ENCODE measurements at regions of chr3 and their contacts with region 1.

Region 1: GRCh38 chr3:111989061-111989678 is 9.6 kb upstream of the TAGLN3 start:
- DNase-seq: peak in 4 of 5 donors; percentile 23 to 39 (median 26)
- H3K4me3 ChIP-seq: no peak overlapping the region
- H3K4me3 Mint-ChIP-seq: peak overlapping the region in 2 of 8 donors; percentile 26 to 39
- H3K27ac ChIP-seq: no peak overlapping the region
- H3K27ac Mint-ChIP-seq: no peak overlapping the region
- H3K4me1 ChIP-seq: peaks cover 17% of the 10 kb centered on the region
- H3K4me1 Mint-ChIP-seq: peaks cover 23 to 28% (median 25%) of the 10 kb centered on the region in 4 donors
- H3K27me3 ChIP-seq: no peaks in the 10 kb centered on the region
- H3K27me3 Mint-ChIP-seq: no peaks in the 10 kb centered on the region

Region 2: DNA sequence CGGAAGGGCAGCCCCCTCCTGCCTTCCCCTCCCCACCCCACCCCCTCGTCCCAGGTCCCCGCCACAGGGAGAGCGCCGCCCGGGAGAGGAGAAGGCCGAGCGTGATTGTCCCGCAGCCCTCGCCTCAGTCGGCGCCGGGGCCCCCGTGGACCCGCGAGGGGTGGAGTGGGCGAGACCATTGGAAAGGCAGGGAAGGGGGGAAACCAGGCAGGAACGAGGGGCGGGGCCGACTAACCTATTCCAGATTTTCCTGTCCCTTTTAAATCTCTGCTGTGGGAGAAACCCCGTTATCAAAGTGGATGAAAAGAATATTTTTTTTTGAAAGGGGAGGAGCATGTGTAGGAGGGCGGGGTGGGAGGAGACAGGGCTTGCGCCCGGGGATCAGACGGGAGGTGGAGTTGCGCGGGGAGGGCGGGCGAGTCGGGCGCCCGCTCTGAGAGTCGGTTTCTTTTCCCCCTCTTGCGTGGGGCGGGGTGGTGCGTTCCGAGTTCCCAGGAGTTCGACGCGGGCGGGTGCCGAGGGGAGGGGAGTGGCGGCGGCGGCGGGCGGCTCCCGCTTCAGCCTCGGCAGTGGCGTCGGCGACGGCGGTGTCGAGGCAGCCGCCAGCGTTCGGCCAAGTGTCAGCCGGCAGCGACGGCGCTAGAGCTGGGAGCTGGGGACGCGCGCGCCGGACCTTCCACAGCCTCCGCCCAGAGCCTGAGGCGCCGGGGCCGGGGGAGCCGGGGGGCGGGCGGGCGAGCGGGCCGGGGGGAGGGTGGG is 917.7 kb before region 1 on chr3 and contains the start of gene NECTIN3:
- CTCF ChIA-PET with region 1: no interaction called
- POLR2A ChIA-PET with region 1: no interaction called
- intact Hi-C with region 1: loop called (anchors 10 kb)
- DNase-seq: peak; percentile 84 to 92 (median 87)
- H3K4me3 ChIP-seq: peak within 1 kb of the TSS; percentile 78 to 82
- H3K4me3 Mint-ChIP-seq: peak within 1 kb of the TSS; percentile 93 to 97 (median 96)
- H3K27ac ChIP-seq: peak within 1 kb of the TSS; percentile 57
- H3K27ac Mint-ChIP-seq: peak within 1 kb of the TSS; percentile 90 to 95 (median 93)
- H3K4me1 ChIP-seq: peaks cover 32% of the 10 kb centered on the region
- H3K4me1 Mint-ChIP-seq: peaks cover 33 to 54% (median 44%) of the 10 kb centered on the region in 4 donors
- H3K27me3 ChIP-seq: no peaks in the 10 kb centered on the region
- H3K27me3 Mint-ChIP-seq: peaks cover 0 to 4% of the 10 kb centered on the region in 2 donors
- total RNA-seq, gene NECTIN3: 12.2 to 15.6 TPM

Region 3: GRCh38 chr3:111967651-111968274 is 21.4 kb before region 1 on chr3:
- CTCF ChIA-PET with region 1: interaction called, 12 read pairs
- POLR2A ChIA-PET with region 1: interaction called, 3 read pairs
- intact Hi-C with region 1: no loop called
- DNase-seq: peak; percentile 69 to 77 (median 69)
- H3K4me3 ChIP-seq: no peak overlapping the region
- H3K4me3 Mint-ChIP-seq: peak overlapping the region in 1 of 8 donors; percentile 11
- H3K27ac ChIP-seq: no peak overlapping the region
- H3K27ac Mint-ChIP-seq: peak overlapping the region in 2 of 7 donors; percentile 43 to 44
- H3K4me1 ChIP-seq: no peaks in the 10 kb centered on the region
- H3K4me1 Mint-ChIP-seq: peaks cover 2 to 6% (median 4%) of the 10 kb centered on the region in 4 donors
- H3K27me3 ChIP-seq: no peaks in the 10 kb centered on the region
- H3K27me3 Mint-ChIP-seq: no peaks in the 10 kb centered on the region

Region 4: DNA sequence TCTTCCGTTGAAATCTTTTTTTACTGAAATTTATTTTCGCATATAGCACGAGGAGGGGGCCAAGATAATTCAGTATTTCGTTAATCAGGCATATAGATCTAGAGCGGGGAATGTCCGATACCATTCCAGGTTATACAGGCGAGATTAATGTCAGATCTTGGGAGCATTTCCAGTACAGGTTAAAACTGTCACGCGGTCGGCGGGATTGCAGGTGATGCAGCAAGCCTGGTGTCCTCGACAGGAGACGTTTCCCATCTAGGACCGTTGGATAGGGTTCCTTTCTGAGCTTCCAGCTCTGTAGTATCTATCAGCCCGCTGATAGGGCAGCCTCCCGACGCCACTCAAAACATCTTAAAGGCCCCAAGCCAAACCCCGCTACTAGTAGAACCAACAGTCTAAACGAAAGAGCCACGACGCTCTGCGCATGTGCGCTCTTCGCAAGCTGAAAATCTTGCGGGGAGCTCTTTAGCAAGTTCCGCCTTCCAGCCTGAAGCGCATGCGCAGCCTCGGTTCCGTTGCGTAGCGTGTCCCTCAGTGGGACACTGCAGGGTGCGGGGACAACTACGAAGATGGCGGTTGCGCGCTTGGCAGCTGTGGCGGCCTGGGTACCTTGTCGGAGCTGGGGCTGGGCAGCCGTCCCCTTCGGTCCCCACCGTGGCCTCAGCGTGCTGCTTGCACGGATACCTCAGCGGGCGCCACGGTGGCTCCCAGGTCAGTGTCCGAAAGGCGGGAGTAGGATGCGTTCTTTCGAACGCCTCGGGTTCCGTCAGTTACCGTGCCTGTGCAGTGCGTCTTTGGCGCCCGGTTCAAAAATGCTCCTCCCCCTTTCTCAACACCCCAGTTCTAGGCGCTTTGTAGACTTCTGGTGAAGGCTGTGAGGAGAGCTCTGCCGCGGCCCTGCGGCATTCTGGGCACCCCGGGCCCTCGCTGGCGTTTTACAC is 10.4 kb before region 1 on chr3 and contains the start of gene ABHD10:
- CTCF ChIA-PET with region 1: interaction called, 55 read pairs
- POLR2A ChIA-PET with region 1: interaction called, 26 read pairs
- intact Hi-C with region 1: loop called (anchors 1 kb)
- DNase-seq: peak; percentile 92 to 98 (median 96)
- H3K4me3 ChIP-seq: peak within 1 kb of the TSS; percentile 90 to 95
- H3K4me3 Mint-ChIP-seq: peak within 1 kb of the TSS; percentile 92 to 97 (median 92)
- H3K27ac ChIP-seq: peak within 1 kb of the TSS; percentile 80
- H3K27ac Mint-ChIP-seq: peak within 1 kb of the TSS; percentile 91 to 97 (median 95)
- H3K4me1 ChIP-seq: peaks cover 43% of the 10 kb centered on the region
- H3K4me1 Mint-ChIP-seq: peaks cover 26 to 48% (median 35%) of the 10 kb centered on the region in 4 donors
- H3K27me3 ChIP-seq: no peaks in the 10 kb centered on the region
- H3K27me3 Mint-ChIP-seq: no peaks in the 10 kb centered on the region
- total RNA-seq, gene ABHD10: 39.7 to 40.1 TPM

Region 5: GRCh38 chr3:112007633-112008032 is 18.5 kb after region 1 on chr3:
- CTCF ChIA-PET with region 1: interaction called, 207 read pairs
- POLR2A ChIA-PET with region 1: no interaction called
- intact Hi-C with region 1: no loop called
- DNase-seq: no peak
- H3K4me3 ChIP-seq: no peak overlapping the region
- H3K4me3 Mint-ChIP-seq: no peak overlapping the region
- H3K27ac ChIP-seq: no peak overlapping the region
- H3K27ac Mint-ChIP-seq: peak overlapping the region in 1 of 7 donors; percentile 58
- H3K4me1 ChIP-seq: peaks cover 13% of the 10 kb centered on the region
- H3K4me1 Mint-ChIP-seq: peaks cover 16 to 20% (median 18%) of the 10 kb centered on the region in 4 donors
- H3K27me3 ChIP-seq: no peaks in the 10 kb centered on the region
- H3K27me3 Mint-ChIP-seq: no peaks in the 10 kb centered on the region

Region 6: DNA sequence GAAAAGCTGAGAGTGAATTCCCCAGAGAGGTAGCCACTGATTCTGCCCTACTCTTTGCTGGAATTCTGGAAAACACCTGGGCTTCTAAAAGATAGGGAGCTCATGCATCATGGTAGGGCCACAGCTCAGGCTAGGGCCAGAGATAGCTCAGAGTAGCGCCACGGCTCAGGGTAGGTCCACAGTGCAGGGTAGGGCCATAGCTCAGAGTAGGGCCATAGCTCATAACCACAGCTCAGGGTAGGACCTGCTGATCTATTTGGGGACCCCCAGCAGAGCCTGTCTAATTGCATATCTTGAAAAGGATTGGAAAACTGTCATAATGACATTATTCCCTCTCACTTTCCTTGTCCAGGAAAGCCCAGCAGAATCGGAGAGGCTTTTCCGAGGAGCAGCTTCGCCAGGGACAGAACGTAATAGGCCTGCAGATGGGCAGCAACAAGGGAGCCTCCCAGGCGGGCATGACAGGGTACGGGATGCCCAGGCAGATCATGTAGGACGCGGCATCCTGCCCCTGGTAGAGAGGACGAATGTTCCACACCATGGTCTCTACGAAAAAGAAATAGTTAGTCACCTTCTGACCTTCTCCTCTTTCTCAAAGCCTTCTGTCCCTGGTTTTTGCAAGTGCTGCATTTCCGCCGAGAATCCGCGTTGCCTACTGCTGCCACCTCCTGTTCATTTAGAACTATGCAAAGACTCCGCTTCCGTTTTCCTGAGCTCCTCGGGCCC is 24.1 kb after region 1 on chr3:
- CTCF ChIA-PET with region 1: interaction called, 207 read pairs
- POLR2A ChIA-PET with region 1: interaction called, 8 read pairs
- intact Hi-C with region 1: loop called (anchors 1 kb)
- DNase-seq: peak; percentile 46 to 54 (median 51)
- H3K4me3 ChIP-seq: peak overlapping the region in 1 of 2 donors; percentile 19
- H3K4me3 Mint-ChIP-seq: peak overlapping the region in 5 of 8 donors; percentile 3 to 51 (median 33)
- H3K27ac ChIP-seq: no peak overlapping the region
- H3K27ac Mint-ChIP-seq: peak overlapping the region in 3 of 7 donors; percentile 4 to 57 (median 56)
- H3K4me1 ChIP-seq: peaks cover 4% of the 10 kb centered on the region
- H3K4me1 Mint-ChIP-seq: peaks cover 5 to 12% (median 8%) of the 10 kb centered on the region in 4 donors
- H3K27me3 ChIP-seq: no peaks in the 10 kb centered on the region
- H3K27me3 Mint-ChIP-seq: no peaks in the 10 kb centered on the region

Region 7: DNA sequence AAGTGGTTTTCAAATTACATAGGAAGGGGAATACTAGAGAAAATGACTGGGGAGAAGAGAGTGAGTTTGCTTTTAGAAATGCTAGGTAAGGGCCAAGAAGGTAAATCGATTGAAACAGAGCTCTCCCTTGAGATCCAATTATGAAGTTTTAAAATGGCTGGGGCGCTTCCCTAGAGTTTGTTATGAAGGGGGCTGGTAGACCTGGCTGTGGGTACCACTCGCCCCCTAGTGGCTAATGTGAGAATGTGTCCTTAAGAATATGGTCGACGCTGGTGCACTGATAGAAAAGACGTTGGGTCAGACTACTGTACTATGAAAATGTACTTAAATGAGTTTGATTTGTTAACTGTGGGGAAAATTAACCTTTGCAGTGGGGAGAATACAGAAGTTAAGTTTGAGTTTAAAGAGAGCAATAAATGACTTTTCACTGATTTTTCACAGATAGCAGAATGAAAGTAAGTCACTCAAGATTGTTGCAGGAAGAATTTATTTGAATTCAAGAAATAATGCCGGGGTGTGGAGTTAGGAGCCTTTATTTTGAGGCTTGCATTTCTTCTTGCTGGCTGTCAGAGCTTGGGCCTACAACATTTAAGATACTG is 54.5 kb after region 1 on chr3:
- CTCF ChIA-PET with region 1: interaction called, 22 read pairs
- POLR2A ChIA-PET with region 1: no interaction called
- intact Hi-C with region 1: loop called (anchors 1 kb)
- DNase-seq: peak; percentile 53 to 64 (median 56)
- H3K4me3 ChIP-seq: no peak overlapping the region
- H3K4me3 Mint-ChIP-seq: no peak overlapping the region
- H3K27ac ChIP-seq: no peak overlapping the region
- H3K27ac Mint-ChIP-seq: no peak overlapping the region
- H3K4me1 ChIP-seq: no peaks in the 10 kb centered on the region
- H3K4me1 Mint-ChIP-seq: no peaks in the 10 kb centered on the region
- H3K27me3 ChIP-seq: no peaks in the 10 kb centered on the region
- H3K27me3 Mint-ChIP-seq: peaks cover 1 to 2% of the 10 kb centered on the region in 2 donors

Measured in CD4-positive, alpha-beta memory T cell (primary cell).